ENCODE measurements at regions of chr10 and their contacts with region 1.

Region 1: DNA sequence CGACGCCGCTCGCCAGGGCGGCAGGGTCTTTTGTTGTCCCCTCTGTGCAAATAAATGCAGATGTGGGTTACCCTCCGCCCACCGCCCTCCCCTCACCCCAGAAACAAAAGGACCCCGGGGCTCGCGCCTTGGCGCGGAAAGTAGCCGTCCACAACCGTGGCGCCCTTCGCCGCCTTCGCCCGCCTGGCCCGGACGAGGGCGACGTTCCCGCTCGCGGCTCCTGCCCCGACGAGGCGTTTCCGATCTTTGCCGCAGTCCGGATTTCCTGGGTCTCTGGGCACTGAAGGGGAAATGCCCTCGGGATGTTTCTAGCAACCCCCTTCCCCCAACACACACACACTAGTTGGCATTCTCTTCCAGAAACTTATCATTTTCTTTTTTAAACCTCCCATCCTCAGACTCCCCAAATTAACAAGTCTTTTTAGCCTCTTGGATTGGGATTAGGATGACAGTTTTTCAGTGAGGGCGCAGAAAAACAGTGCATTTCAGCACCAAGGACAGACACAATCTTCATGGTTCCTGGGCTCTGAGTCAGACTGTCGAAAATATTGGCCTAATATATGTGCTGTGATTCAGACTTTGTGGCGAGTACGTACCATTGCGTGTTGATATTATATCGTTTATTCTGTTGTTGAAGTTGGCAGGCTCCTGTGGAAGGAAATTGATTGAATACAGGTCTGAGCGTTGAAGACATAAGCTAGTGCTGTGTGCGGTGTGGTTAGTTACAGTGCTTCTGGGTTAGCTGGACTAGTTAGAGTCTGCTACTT is 771 bp downstream of the PHYHIPL start:
- DNase-seq: peak in 1 of 2 donors; percentile 87
- H3K4me3 ChIP-seq: peak overlapping the region; percentile 34 to 52 (median 44)
- H3K27ac ChIP-seq: no peak overlapping the region
- H3K4me1 ChIP-seq: peaks cover 16 to 21% (median 18%) of the 10 kb centered on the region in 4 donors
- H3K27me3 ChIP-seq: peaks cover 0 to 50% (median 25%) of the 10 kb centered on the region in 3 donors
- CTCF ChIP-seq: no peak
- EP300 ChIP-seq: no peak
- POLR2A ChIP-seq: no peak

Region 2: DNA sequence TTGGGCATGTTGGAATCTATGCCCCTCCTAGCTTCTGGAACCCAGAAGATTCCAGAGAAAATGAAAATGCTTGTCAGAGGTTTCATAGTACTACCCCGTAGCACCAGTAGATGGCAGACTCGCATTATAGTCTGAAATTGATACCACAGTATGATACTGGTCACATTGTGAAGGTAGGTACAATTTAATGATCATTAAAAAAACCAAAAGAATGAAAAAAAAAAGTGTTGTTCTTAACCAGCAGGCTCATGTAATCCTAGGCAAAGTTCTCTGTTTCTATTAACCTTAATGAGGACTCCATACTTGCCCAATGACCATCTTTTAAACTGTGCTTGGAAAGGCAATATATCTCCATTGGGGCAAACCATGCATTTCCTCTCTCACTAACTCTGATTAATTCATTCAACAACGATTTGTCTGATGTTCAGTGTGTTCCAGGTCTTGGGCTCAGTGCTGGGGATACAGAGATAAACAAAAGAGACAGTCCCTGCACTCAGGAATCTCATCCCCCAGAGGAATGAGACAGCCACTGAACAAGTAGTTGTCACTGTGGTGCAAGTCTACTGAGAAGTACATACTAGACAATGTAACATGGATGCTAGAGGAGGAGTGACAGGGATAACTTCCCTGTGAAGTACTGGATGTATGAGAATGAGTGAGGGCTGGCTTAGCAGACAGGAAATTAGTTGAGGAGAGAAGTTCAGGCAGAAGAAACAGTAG is 224.3 kb before region 1 on chr10:
- intact Hi-C with region 1: loop called (anchors 10 kb)
- DNase-seq: peak; percentile 46 to 77
- H3K4me3 ChIP-seq: no peak overlapping the region
- H3K27ac ChIP-seq: peak overlapping the region in 3 of 5 donors; percentile 26 to 39 (median 38)
- H3K4me1 ChIP-seq: no peaks in the 10 kb centered on the region
- H3K27me3 ChIP-seq: no peaks in the 10 kb centered on the region
- CTCF ChIP-seq: peak in 5 of 7 experiments; percentile 63 to 85 (median 76)
- EP300 ChIP-seq: no peak
- POLR2A ChIP-seq: no peak

Region 3: GRCh38 chr10:59315465-59315864 is 138.3 kb after region 1 on chr10:
- intact Hi-C with region 1: no loop called
- DNase-seq: no peak
- H3K4me3 ChIP-seq: no peak overlapping the region
- H3K27ac ChIP-seq: no peak overlapping the region
- H3K4me1 ChIP-seq: peaks cover 0 to 3% (median 0%) of the 10 kb centered on the region in 4 donors
- H3K27me3 ChIP-seq: no peaks in the 10 kb centered on the region
- CTCF ChIP-seq: no peak
- EP300 ChIP-seq: no peak
- POLR2A ChIP-seq: no peak